GM10248 (cell line): ENCODE measurements at regions of chr1 and their contacts with region 1.

Region 1: GRCh38 chr1:198157241-198157846 is 546 bp downstream of the NEK7 start:
- DNase-seq: peak; percentile 85
- CTCF ChIP-seq: no peak

Region 2: DNA sequence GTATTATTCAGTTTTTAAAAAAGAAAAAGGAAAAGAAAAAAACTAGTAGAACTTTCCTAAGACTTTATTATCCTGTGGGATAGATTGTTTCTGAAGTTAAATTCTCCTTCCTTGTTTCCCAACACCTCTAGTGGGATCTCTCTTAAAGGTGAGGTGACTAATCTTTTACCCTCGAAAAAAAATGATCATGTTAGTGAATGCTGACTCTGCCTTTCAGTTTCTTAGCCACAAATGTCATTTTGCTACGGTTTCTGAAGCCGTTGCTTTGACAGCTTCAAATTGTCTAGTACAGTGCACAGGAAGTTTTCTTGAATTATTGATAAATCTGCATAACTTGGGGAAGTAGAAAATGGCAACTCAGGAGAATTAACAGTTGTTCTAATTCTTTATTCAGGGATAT is 13.5 kb before region 1 on chr1:
- CTCF ChIA-PET with region 1: interaction called, 13 read pairs
- POLR2A ChIA-PET with region 1: no interaction called
- DNase-seq: peak; percentile 20
- CTCF ChIP-seq: no peak

Region 3: DNA sequence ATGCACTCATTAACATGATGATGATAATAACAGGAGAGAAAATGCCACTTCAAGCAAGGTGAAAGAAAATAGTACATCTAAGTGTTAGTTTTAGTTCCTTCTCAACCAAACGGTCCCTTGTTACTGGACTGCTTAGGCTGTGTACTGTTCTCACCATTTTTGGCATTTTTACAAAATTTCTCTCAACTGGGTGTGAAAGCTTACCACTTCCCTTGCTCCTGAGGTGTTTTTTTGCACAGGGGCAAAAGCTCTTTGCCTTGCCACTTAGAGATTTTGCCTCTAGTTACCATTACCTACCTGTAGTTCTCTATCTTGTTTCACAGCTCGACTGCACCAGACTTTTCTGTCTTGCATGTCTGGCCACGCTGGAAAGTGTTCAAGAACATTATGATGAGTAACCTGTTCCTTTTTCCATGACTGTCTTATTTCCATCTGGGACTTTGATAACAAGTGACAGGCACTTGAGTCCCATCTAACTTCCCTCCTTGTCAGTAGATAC is 10.1 kb after region 1 on chr1:
- CTCF ChIA-PET with region 1: interaction called, 21 read pairs
- POLR2A ChIA-PET with region 1: no interaction called
- DNase-seq: peak; percentile 17
- CTCF ChIP-seq: no peak

Region 4: DNA sequence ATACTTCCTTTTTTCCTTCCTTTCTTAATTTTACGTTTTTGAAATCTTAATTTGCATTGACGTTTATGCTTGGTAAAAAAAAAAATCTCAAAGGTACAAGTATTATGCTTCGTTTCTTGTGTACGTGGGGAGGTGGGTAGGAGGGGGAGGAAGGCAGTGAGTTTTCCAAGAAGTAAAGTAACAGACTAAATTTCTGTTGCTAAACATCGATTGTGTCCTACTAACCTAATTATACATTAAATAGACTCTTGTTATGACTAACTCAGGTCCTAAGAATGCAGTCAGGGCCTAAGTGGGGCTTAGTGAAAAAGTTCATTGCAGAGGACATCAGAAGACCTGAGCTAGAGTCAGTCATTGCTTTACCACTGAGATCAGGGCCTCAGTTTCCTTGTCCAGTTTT is 17.0 kb after region 1 on chr1:
- CTCF ChIA-PET with region 1: interaction called, 13 read pairs
- POLR2A ChIA-PET with region 1: interaction called, 3 read pairs
- DNase-seq: peak; percentile 8
- CTCF ChIP-seq: no peak